Activated naive CD4-positive, alpha-beta T cell treated with anti-CD3 and anti-CD28 coated beads, Interleukin-2, amount 10 ng/mL, durations not matched to agents 7 days and 5 days (primary cell): ENCODE measurements at regions of chr1 and their contacts with region 1.

Region 1: GRCh38 chr1:109643385-109644230 is 12.3 kb upstream of the GSTM4 start:
- DNase-seq: peak; percentile 92
- H3K4me3 Mint-ChIP-seq: no peak overlapping the region
- H3K27ac Mint-ChIP-seq: peak overlapping the region; percentile 5
- H3K4me1 Mint-ChIP-seq: peaks cover 13% of the 10 kb centered on the region
- H3K27me3 Mint-ChIP-seq: peaks cover 37% of the 10 kb centered on the region

Region 2: DNA sequence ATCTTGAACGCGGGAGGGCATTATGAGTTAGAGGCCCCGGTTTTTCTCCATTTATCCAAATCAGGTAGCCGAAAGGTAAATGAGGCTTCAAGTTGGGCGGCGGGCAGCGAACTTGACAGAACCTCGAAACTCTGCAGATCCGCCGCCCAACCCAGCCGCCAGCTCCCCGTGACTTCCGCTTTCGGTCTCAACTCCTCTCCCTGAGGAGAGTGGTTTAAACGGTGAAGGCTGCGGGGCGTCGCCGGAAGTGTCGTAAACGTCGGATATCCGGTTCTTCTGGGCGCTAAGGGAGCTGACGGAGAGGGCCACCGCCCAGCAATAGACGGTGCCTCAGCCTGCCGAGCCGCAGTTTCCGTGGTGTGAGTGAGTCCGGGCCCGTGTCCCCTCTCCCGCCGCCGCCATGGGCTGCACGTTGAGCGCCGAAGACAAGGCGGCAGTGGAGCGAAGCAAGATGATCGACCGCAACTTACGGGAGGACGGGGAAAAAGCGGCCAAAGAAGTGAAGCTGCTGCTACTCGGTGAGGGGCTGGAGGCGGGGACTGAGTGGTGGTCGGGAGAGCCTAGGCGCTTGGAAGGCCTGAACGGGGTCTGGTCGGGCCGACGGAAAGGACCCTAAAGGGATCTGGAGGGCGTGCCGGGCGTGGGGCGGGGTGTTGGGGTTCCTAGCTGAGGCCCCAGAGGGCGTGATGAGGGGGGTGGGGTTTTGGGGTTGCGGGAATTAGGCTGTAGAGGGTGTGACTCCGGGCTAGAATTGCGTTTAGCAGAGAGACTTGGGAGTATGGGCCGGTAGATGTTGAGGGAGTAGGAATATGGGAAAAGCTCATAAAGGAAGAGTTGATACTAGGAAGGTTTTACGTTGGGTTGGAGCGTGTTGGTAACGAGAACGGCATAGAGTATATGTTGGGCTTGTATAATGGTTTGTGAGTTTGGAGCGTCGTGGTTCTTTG is 95.0 kb before region 1 on chr1 and contains the start of gene GNAI3:
- CTCF ChIA-PET with region 1: interaction called, 145 read pairs
- DNase-seq: peak; percentile 99
- H3K4me3 Mint-ChIP-seq: peak within 1 kb of the TSS; percentile 87
- H3K27ac Mint-ChIP-seq: peak within 1 kb of the TSS; percentile 98
- H3K4me1 Mint-ChIP-seq: peaks cover 47% of the 10 kb centered on the region
- H3K27me3 Mint-ChIP-seq: peaks cover 5% of the 10 kb centered on the region

Region 3: GRCh38 chr1:109620841-109621286 is 22.7 kb before region 1 on chr1:
- CTCF ChIA-PET with region 1: interaction called, 34 read pairs
- DNase-seq: peak; percentile 99
- H3K4me3 Mint-ChIP-seq: peak overlapping the region; percentile 96
- H3K27ac Mint-ChIP-seq: peak overlapping the region; percentile 93
- H3K4me1 Mint-ChIP-seq: peaks cover 77% of the 10 kb centered on the region
- H3K27me3 Mint-ChIP-seq: no peaks in the 10 kb centered on the region

Region 4: DNA sequence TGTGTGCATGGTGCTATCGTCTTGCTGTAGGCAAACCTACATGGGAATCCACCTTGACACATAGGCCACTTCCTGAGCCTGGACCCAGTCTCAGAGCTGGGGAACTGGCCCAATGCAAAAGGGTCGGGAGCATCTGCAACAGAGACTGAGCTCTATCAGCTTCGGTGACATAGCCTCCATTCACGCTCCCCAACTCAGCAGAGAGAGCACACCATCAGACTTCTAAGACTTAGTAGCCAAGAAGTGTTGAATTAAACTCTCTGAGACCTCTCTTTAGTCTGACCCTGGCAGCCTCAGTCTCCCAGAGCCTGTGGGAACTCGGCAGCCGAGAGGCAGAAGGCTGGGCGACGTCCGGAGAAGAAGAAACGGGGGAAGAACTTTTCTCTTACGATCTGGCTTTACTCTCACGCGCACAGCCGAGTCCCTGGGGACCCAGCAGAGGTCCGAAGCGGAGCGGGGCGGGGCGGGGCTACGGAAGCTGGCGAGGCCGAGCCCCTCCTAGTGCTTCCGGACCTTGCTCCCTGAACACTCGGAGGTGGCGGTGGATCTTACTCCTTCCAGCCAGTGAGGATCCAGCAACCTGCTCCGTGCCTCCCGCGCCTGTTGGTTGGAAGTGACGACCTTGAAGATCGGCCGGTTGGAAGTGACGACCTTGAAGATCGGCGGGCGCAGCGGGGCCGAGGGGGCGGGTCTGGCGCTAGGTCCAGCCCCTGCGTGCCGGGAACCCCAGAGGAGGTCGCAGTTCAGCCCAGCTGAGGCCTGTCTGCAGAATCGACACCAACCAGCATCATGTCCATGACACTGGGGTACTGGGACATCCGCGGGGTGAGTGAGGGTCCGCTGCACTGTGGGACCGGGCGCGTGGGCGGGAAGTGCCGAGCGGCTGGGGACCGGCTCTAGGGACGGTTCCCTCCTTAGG is 12.3 kb after region 1 on chr1 and contains the start of gene GSTM4:
- CTCF ChIA-PET with region 1: interaction called, 70 read pairs
- DNase-seq: peak; percentile 80
- H3K4me3 Mint-ChIP-seq: peak within 1 kb of the TSS; percentile 84
- H3K27ac Mint-ChIP-seq: peak within 1 kb of the TSS; percentile 71
- H3K4me1 Mint-ChIP-seq: peaks cover 21% of the 10 kb centered on the region
- H3K27me3 Mint-ChIP-seq: peaks cover 42% of the 10 kb centered on the region

Region 5: DNA sequence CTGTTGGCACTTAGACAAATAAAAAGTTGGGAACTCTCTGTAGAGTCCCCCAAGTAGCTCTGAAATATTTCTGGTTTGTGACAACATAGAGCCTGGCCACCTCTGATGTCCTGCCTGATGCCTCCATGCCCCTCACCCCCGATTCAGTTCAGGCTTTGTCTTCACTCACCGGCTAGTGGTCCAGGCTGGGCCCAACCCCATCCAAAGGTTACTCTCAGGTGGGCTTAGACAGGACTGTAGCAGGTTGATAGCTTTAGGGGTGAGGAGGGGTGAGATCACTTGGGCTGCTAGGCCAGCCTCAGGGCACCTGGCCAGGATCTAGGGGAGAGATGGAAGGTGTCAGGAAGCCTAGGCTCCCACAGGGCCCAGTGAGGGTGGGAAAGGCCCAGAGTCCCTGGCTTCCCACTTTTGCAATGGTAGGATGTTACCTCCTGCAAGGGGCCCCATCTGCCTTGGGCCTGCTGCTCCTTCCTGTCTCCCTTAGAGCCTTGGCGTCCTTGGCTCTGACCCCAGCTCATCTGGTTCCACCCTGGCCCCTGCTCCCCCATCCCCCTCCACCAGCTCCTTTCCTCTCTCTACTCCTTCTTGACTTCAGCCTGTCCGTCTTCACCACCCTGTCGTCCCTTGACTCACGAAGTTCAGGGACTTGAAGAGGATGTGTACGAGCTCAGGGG is 113.4 kb after region 1 on chr1:
- CTCF ChIA-PET with region 1: interaction called, 11 read pairs
- DNase-seq: no peak
- H3K4me3 Mint-ChIP-seq: no peak overlapping the region
- H3K27ac Mint-ChIP-seq: no peak overlapping the region
- H3K4me1 Mint-ChIP-seq: no peaks in the 10 kb centered on the region
- H3K27me3 Mint-ChIP-seq: peaks cover 28% of the 10 kb centered on the region

Region 6: DNA sequence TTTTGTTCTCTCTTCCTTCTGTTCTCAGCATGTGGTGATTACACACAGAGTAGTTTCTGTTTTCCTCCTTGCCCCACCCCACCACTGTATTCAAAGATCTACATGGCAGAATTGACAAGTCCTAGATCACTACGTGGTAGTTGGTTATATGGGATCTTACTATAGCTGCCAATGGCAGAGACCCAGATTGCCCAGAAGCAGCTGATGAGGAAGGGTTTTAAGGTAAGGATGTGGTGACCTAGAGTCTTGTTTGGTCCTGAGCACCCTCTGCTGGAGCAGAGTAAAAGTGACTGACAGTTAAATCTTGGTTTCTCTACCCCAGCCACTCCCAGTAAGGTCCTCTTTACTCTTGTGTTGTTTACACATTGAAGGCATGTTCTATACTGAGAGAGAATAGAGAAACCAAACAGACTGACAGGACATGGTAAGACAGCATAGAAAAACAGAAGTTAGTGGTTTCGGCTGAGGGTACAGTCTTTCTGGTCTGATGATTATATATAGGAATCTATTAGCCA is 368.0 kb after region 1 on chr1:
- CTCF ChIA-PET with region 1: interaction called, 23 read pairs
- DNase-seq: peak; percentile 63
- H3K4me3 Mint-ChIP-seq: no peak overlapping the region
- H3K27ac Mint-ChIP-seq: peak overlapping the region; percentile 43
- H3K4me1 Mint-ChIP-seq: peaks cover 3% of the 10 kb centered on the region
- H3K27me3 Mint-ChIP-seq: no peaks in the 10 kb centered on the region